ENCODE measurements at regions of chr5 and their contacts with region 1.

Region 1: DNA sequence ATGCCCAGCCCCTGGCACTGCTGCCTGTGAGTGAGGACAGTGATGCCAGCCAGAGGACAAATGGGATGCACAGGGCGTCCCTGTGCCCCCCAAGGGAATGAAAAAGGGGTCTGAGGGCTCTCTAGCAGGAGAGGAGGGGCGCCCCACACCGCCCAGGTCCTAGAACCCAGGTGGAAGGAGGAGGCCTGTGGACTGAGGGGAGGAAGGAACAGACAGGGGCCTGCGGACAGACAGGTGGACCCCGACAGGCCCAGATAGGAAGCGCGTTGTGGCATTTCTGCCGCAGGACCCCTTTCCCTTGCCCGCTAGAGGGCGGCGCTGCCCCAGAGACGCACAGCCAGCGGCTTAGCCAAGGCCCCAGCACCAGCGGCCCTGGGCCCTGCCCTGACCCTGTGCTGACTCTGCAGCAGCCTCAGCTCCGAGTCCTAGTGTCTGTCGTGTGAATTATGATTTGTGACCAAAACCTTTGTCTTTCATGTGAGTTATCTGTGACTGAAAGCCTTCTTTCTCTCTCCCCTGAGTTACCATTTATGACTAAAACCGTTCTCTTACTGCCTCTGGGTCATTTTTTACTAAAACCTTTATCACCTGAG is 30.7 kb downstream of the TRIP13 start:
- DNase-seq: peak; percentile 90
- ATAC-seq: peak; percentile 95

Region 2: DNA sequence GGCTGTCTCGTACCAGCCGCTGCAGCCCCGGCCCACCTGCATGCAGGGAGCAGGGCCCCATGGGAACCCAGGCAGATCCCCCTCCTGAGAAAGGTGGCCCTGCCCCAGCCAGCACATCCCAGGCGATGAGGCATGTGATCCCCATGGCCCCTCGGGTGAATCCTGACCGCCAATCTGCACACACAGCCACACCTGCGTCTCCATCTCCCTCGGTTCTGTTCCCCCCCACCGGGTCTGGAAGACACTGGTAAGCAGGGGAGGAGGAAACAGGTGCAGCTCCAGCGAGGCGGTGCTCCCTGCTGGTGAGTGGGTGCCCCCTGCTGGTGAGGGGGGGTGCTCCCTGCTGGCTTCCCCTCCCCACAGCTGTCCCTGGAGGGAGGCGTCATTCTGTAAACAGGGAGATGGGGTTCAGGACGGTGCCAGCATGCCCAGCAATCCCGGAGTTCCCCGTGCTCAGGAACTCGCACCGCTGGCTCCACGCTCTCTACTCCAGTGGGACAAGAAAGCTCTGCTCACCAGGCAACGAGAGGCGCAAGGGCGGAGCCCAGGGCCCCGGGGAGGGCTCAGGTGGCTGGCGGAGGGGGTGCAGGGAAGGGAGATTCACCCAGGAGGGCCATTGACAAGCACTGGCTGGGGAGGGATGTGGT is 216.9 kb after region 1 on chr5:
- intact Hi-C with region 1: loop called (anchors 10 kb)
- DNase-seq: peak; percentile 85
- ATAC-seq: peak; percentile 76

Measured in sciatic nerve (tissue), 2 donors.